ENCODE measurements at regions of chr17 and their contacts with region 1.

Region 1: DNA sequence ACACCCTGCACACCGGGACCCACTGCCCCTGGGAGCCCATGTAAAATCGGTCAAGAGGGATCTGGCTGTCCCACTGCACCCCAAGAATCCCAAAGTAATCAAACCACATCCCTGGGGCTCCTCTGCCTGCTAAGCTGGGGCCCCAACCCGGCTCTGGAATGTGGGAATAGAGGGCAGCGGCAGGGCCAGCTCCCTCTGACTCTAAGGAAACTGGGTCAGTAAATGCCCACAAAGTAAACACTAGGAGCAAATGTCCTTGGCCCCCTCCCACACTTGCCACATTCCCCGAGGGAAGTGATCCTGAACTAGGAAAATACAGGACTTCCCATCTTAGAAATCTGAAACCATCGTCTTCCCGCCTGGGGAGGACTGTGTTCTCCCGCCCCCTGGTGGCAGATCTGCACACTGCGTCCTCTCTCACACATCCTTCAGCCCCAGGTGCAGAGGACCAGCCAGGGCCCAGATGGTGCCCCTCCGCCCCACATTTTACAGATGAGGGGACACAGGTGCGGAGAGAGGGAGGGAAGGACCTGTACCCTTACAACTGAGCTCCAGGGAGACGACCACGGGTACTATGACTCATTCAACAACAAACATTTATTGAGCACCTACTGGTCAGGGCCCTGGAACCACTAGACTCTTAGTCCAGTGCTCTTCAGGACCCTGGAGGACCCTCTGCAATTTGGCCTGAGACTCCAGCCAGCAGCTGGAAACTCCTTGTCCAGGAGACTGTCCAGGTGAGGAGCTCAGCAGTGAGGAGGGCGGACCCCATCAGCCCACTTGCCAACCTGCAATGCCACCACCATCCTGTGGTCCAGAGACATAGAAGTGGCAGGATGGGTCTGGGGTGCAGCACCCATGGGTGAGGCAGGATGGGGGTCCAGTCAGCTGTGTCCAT is 10.1 kb downstream of the P3H4 start:
- DNase-seq: peak; percentile 68
- ATAC-seq: peak; percentile 73
- H3K4me3 ChIP-seq: peak overlapping the region in 2 of 3 experiments; percentile 5 to 63; a peak in 3 of 6 replicates
- H3K27ac ChIP-seq: no peak overlapping the region
- H3K4me1 ChIP-seq: peaks cover 30% of the 10 kb centered on the region
- H3K27me3 ChIP-seq: no peaks in the 10 kb centered on the region
- CTCF ChIP-seq: peak; percentile 98
- EP300 ChIP-seq: no peak
- POLR2A ChIP-seq: no peak; a peak in 1 of 4 replicates
- RAD21 ChIP-seq: peak; percentile 96

Region 2: GRCh38 chr17:41738077-41738735 is 63.4 kb before region 1 on chr17:
- CTCF ChIA-PET with region 1: interaction called, 97 read pairs
- POLR2A ChIA-PET with region 1: interaction called, 6 read pairs
- in situ Hi-C with region 1: loop called (anchors 5 kb)
- intact Hi-C with region 1: loop called (anchors 1 kb)
- DNase-seq: peak; percentile 78
- ATAC-seq: peak; percentile 79
- H3K4me3 ChIP-seq: peak overlapping the region in 1 of 3 experiments; percentile 23; a peak in 2 of 6 replicates
- H3K27ac ChIP-seq: no peak overlapping the region
- H3K4me1 ChIP-seq: peaks cover 38% of the 10 kb centered on the region
- H3K27me3 ChIP-seq: peaks cover 18 to 59% of the 10 kb centered on the region in 2 experiments
- CTCF ChIP-seq: peak; percentile 99
- EP300 ChIP-seq: no peak
- POLR2A ChIP-seq: no peak
- RAD21 ChIP-seq: peak; percentile 100

Region 3: GRCh38 chr17:41777574-41778188 is 23.9 kb before region 1 on chr17:
- CTCF ChIA-PET with region 1: interaction called, 5 read pairs
- POLR2A ChIA-PET with region 1: interaction called, 25 read pairs
- in situ Hi-C with region 1: no loop called
- intact Hi-C with region 1: loop called (anchors 1 kb)
- DNase-seq: peak; percentile 77
- ATAC-seq: peak; percentile 61
- H3K4me3 ChIP-seq: peak overlapping the region; percentile 24 to 60 (median 42)
- H3K27ac ChIP-seq: peak overlapping the region; percentile 75
- H3K4me1 ChIP-seq: peaks cover 60% of the 10 kb centered on the region
- H3K27me3 ChIP-seq: no peaks in the 10 kb centered on the region
- CTCF ChIP-seq: no peak
- EP300 ChIP-seq: peak in 1 of 2 experiments; percentile 55; a peak in 1 of 4 replicates
- POLR2A ChIP-seq: no peak
- RAD21 ChIP-seq: no peak

Region 4: GRCh38 chr17:41786227-41787020 is 15.2 kb before region 1 on chr17 and contains the start of gene JUP:
- CTCF ChIA-PET with region 1: interaction called, 4 read pairs
- POLR2A ChIA-PET with region 1: interaction called, 86 read pairs
- in situ Hi-C with region 1: no loop called
- intact Hi-C with region 1: no loop called
- DNase-seq: peak; percentile 99
- ATAC-seq: peak; percentile 97
- H3K4me3 ChIP-seq: peak within 1 kb of the TSS; percentile 60 to 90 (median 71)
- H3K27ac ChIP-seq: peak within 1 kb of the TSS; percentile 62
- H3K4me1 ChIP-seq: peaks cover 34% of the 10 kb centered on the region
- H3K27me3 ChIP-seq: no peaks in the 10 kb centered on the region; a peak in 1 of 5 replicates
- CTCF ChIP-seq: peak; percentile 83
- EP300 ChIP-seq: no peak
- POLR2A ChIP-seq: peak; percentile 89 to 97
- RAD21 ChIP-seq: peak; percentile 93
- total RNA-seq, gene JUP: 20.6 and 20.9 TPM in 2 replicates